Heart right ventricle (tissue), 16 donors: ENCODE measurements at regions of chr4 and their contacts with region 1.

Region 1: GRCh38 chr4:61044837-61045236 is 155.3 kb upstream of the ADGRL3 start:
- DNase-seq: no peak
- ATAC-seq: no peak
- H3K4me3 ChIP-seq: no peak overlapping the region
- H3K27ac ChIP-seq: no peak overlapping the region
- H3K4me1 ChIP-seq: no peaks in the 10 kb centered on the region
- H3K27me3 ChIP-seq: no peaks in the 10 kb centered on the region
- CTCF ChIP-seq: no peak

Region 2: GRCh38 chr4:61094854-61095598 is 50.2 kb after region 1 on chr4:
- intact Hi-C with region 1: loop called in 1 of 10 experiments (anchors 1 kb)
- DNase-seq: no peak
- ATAC-seq: no peak
- H3K4me3 ChIP-seq: no peak overlapping the region
- H3K27ac ChIP-seq: no peak overlapping the region
- H3K4me1 ChIP-seq: no peaks in the 10 kb centered on the region
- H3K27me3 ChIP-seq: no peaks in the 10 kb centered on the region
- CTCF ChIP-seq: no peak